Activated CD4-positive, alpha-beta T cell treated with anti-CD3 and anti-CD28 coated beads, Interleukin-2, amount 10 ng/mL, durations not matched to agents 7 days and 5 days (primary cell): ENCODE measurements at regions of chr11 and their contacts with region 1.

Region 1: GRCh38 chr11:73980001-73980961 is 2.4 kb downstream of the UCP2 start:
- DNase-seq: peak; percentile 94
- H3K4me3 Mint-ChIP-seq: peak overlapping the region; percentile 83
- H3K27ac Mint-ChIP-seq: peak overlapping the region; percentile 94
- H3K4me1 Mint-ChIP-seq: peaks cover 68% of the 10 kb centered on the region
- H3K27me3 Mint-ChIP-seq: no peaks in the 10 kb centered on the region

Region 2: DNA sequence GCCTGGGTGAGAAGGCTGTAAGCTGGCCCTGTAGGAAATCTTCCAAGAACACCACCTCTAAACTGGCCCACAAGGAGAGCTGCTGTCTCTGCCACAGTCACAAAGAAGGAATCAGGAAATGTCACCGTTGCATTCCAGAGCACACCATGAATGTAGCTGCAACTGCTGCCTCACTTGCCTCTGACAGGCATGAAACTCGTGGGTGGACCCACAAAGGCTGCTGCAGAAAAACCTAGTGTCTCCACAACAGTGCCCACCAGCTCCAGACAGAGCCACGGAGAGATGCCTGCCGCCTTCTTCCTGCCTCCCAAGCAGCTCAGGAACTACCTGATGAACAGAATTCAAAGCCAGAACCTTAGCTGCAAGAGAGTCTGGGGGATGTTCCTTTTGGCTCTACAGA is 19.0 kb before region 1 on chr11:
- CTCF ChIA-PET with region 1: interaction called, 11 read pairs
- POLR2A ChIA-PET with region 1: no interaction called
- DNase-seq: no peak
- H3K4me3 Mint-ChIP-seq: no peak overlapping the region
- H3K27ac Mint-ChIP-seq: no peak overlapping the region
- H3K4me1 Mint-ChIP-seq: peaks cover 17% of the 10 kb centered on the region
- H3K27me3 Mint-ChIP-seq: peaks cover 8% of the 10 kb centered on the region

Region 3: DNA sequence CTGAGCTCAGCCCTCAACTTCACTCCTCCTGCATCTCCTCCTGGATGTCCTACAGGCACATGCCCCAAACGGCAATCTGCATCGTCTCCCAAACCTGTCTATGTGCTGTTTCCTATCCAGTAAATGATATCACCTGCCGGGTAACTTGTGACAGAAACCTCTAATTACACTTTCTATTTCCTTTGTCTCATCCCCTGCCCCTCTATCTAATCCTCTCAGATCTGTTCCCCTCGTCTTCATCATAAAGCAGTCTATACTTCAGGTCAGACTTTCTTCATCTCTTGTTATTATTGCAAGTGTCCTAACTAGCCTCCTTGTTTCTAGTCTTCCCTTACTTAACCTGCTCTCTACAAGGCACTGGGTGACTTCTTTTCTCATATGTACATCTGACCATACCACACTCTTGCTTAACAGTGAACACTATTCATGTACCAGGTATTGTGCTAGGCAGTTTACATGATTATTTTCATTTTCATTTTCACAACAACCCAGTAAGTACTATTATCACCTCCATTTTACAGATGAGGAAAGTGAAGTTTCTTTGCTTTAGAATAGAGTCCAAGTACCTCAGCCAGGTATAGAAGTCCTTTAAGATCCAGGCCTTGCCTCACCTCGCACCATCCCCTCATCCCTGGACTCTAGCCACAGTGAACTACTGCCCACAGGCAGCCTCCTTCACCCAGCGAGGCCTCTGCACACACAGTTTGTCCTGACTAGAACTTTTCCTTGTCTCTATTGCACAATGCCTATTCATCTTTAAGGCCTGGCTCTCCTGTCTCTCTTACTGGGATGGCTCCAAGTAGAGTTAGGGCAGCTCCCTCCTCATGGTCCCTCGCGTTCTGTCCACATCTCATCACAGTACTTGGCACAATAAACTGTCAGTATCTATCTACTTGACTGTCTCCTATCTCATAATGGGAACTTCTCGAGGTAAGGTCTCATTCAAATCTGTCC is 50.7 kb after region 1 on chr11:
- CTCF ChIA-PET with region 1: no interaction called
- POLR2A ChIA-PET with region 1: no interaction called
- DNase-seq: no peak
- H3K4me3 Mint-ChIP-seq: no peak overlapping the region
- H3K27ac Mint-ChIP-seq: peak overlapping the region; percentile 84
- H3K4me1 Mint-ChIP-seq: peaks cover 29% of the 10 kb centered on the region
- H3K27me3 Mint-ChIP-seq: no peaks in the 10 kb centered on the region